ENCODE measurements at regions of chr10 and their contacts with region 1.

Region 1: GRCh38 chr10:103678178-103678526 is 177.2 kb downstream of the SH3PXD2A start:
- DNase-seq: peak; percentile 100
- ATAC-seq: peak; percentile 90
- H3K4me3 ChIP-seq: peak overlapping the region; percentile 46
- H3K27ac ChIP-seq: peak overlapping the region; percentile 91
- H3K4me1 ChIP-seq: peaks cover 22% of the 10 kb centered on the region
- H3K27me3 ChIP-seq: no peaks in the 10 kb centered on the region
- CTCF ChIP-seq: no peak
- POLR2A ChIP-seq: no peak
- RAD21 ChIP-seq: peak; percentile 7; the same call in 1 of the 2 replicates

Region 2: DNA sequence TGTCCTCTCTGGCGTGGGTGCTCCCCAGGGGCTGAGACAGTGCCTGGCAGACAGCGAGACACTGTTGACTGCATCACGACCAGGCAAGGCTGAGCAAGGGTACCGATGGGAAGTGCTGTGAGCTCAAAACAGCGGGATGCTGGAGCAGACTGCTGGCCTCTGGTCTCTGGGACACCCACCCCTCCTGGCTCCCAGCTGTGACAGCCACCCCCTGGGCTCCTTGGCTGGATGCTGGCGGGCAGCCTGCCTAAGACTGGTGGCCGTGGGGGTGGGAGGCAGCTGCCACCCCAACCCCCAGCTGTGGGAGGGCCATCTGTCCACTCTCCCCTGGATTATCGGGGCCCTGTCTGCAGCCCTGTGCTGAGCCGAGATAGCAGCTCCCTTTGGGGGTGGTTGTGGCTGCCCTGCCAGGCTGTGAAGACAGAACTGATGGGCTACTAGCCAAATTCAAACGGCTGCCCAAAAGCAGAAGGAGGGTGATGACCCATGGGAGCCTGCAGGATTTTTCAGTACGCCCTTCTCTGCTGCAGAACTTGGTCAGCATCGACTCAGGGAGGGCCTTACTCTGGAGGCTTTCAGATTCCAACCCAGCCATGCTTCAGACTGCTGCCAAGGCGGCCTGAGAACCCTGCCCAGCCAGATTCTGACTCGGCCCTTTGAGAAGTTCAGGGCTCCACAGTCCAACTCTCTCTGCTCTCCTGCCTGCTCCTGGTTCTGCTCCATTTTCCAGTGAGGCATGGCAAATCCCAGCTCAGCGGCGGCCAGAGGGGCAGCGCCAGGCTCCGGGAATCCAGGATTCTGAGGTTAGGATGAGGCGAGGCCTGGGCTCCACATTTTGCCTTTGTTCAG is 59.4 kb before region 1 on chr10:
- CTCF ChIA-PET with region 1: no interaction called
- POLR2A ChIA-PET with region 1: interaction called, 7 read pairs
- dilution Hi-C with region 1: loop called (anchors 10 kb)
- in situ Hi-C with region 1: no loop called
- intact Hi-C with region 1: loop called (anchors 5 kb)
- DNase-seq: no peak
- ATAC-seq: no peak; the same call in 1 of the 2 replicates
- H3K4me3 ChIP-seq: no peak overlapping the region
- H3K27ac ChIP-seq: no peak overlapping the region
- H3K4me1 ChIP-seq: peaks cover 16% of the 10 kb centered on the region
- H3K27me3 ChIP-seq: no peaks in the 10 kb centered on the region
- CTCF ChIP-seq: no peak
- POLR2A ChIP-seq: no peak
- RAD21 ChIP-seq: no peak

Region 3: DNA sequence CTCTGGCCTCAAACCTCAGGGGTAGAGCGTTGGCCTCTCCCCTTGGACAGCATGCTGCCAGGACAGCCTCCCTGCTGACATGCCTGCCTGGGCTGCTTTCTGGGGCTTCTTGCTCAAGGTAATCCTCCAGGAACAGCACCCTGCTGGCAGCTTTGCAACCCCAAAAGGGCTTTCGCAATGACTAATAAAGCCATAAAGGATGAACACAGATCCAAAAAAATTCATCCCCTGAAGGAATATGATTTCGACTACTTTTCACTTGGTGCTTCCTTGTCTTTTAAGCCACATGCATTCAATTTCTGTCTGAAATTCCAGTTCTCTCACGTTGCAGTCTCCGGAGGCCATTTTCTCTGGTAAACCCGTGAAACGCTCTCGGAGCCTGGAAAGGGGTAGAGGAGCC is 192.4 kb after region 1 on chr10:
- CTCF ChIA-PET with region 1: no interaction called
- POLR2A ChIA-PET with region 1: no interaction called
- dilution Hi-C with region 1: no loop called
- in situ Hi-C with region 1: no loop called
- intact Hi-C with region 1: no loop called
- DNase-seq: peak; percentile 40
- ATAC-seq: peak; percentile 60
- H3K4me3 ChIP-seq: no peak overlapping the region
- H3K27ac ChIP-seq: no peak overlapping the region
- H3K4me1 ChIP-seq: no peaks in the 10 kb centered on the region
- H3K27me3 ChIP-seq: no peaks in the 10 kb centered on the region; the same call in 1 of the 2 replicates
- CTCF ChIP-seq: no peak
- POLR2A ChIP-seq: no peak
- RAD21 ChIP-seq: no peak

Region 4: GRCh38 chr10:104291439-104291951 is 613.3 kb after region 1 on chr10:
- CTCF ChIA-PET with region 1: no interaction called
- POLR2A ChIA-PET with region 1: no interaction called
- dilution Hi-C with region 1: no loop called
- in situ Hi-C with region 1: no loop called
- intact Hi-C with region 1: no loop called
- DNase-seq: peak; percentile 84
- ATAC-seq: peak; percentile 99
- H3K4me3 ChIP-seq: no peak overlapping the region
- H3K27ac ChIP-seq: no peak overlapping the region
- H3K4me1 ChIP-seq: no peaks in the 10 kb centered on the region; the same call in 1 of the 2 replicates
- H3K27me3 ChIP-seq: no peaks in the 10 kb centered on the region
- CTCF ChIP-seq: peak; percentile 100
- POLR2A ChIP-seq: 0 out of 2 replicates have a peak, but pooled peaks have one; percentile 19
- RAD21 ChIP-seq: peak; percentile 96

Measured in IMR-90 (cell line).